Endothelial cell of umbilical vein (primary cell): ENCODE measurements at regions of chr22 and their contacts with region 1.

Region 1: GRCh38 chr22:41966607-41967240 is 2.5 kb upstream of the SEPTIN3 start:
- DNase-seq: peak; percentile 72
- H3K4me3 ChIP-seq: no peak overlapping the region
- H3K27ac ChIP-seq: no peak overlapping the region
- H3K4me1 ChIP-seq: peaks cover 4% of the 10 kb centered on the region
- H3K27me3 ChIP-seq: no peaks in the 10 kb centered on the region
- CTCF ChIP-seq: peak; percentile 34 to 48
- POLR2A ChIP-seq: no peak

Region 2: DNA sequence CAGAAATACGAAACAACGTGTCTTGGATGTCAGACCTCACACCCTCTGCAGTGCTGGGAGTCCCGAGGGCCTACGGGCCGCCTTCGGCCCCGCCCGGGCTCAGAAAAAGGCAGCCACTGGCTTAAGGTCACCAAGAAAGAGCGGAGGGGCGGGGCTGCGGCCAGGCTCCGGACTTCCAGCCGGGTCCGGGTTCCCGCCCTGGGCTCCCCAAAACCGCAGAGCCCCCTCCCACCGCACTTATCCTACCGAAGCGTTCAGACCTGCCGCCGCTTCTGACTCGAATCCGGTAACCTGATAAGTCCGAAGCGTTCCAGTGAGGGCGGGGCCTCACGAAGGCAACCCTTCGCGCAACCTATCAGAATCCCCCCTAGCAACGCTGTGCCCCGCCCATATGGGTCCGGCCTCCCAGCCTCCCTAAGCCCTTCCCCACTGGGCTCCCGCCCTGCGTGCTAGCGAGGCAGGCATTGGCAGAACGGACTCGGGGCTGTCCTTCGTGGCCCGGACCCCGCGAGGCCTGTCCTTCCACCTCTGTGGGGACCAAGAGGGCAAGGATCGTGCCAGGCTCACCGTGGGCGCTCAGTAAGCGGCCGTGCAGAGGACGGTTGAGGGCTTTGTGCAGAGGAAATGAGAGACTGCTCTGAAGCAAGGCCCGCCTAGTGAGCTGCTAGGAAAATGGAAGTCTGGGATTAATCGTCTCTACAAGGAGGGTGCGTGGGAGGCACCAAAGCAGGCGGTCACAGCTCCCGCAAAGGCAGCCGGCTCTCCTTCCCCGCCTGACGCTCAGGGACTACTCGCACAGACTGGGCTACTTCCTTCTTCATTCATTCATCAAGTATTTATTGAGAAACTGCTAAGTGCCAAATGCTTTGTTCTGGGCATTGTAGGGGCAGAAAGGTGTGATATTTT is 104.0 kb after region 1 on chr22 and contains the start of gene NAGA:
- CTCF ChIA-PET with region 1: interaction called, 4 read pairs
- POLR2A ChIA-PET with region 1: no interaction called
- dilution Hi-C with region 1: no loop called
- intact Hi-C with region 1: loop called (anchors 2 kb)
- DNase-seq: peak; percentile 97
- H3K4me3 ChIP-seq: peak within 1 kb of the TSS; percentile 26 to 60 (median 54)
- H3K27ac ChIP-seq: peak within 1 kb of the TSS; percentile 30
- H3K4me1 ChIP-seq: peaks cover 23% of the 10 kb centered on the region
- H3K27me3 ChIP-seq: no peaks in the 10 kb centered on the region
- CTCF ChIP-seq: no peak
- POLR2A ChIP-seq: peak; percentile 65
- total RNA-seq, gene NAGA: 29.0 and 33.1 TPM in 2 replicates

Region 3: GRCh38 chr22:42114721-42115120 is 148.0 kb after region 1 on chr22:
- CTCF ChIA-PET with region 1: interaction called, 83 read pairs
- POLR2A ChIA-PET with region 1: no interaction called
- dilution Hi-C with region 1: no loop called
- intact Hi-C with region 1: loop called (anchors 1 kb)
- DNase-seq: peak; percentile 41
- H3K4me3 ChIP-seq: no peak overlapping the region
- H3K27ac ChIP-seq: no peak overlapping the region
- H3K4me1 ChIP-seq: no peaks in the 10 kb centered on the region
- H3K27me3 ChIP-seq: no peaks in the 10 kb centered on the region
- CTCF ChIP-seq: peak; percentile 32 to 56
- POLR2A ChIP-seq: no peak

Region 4: DNA sequence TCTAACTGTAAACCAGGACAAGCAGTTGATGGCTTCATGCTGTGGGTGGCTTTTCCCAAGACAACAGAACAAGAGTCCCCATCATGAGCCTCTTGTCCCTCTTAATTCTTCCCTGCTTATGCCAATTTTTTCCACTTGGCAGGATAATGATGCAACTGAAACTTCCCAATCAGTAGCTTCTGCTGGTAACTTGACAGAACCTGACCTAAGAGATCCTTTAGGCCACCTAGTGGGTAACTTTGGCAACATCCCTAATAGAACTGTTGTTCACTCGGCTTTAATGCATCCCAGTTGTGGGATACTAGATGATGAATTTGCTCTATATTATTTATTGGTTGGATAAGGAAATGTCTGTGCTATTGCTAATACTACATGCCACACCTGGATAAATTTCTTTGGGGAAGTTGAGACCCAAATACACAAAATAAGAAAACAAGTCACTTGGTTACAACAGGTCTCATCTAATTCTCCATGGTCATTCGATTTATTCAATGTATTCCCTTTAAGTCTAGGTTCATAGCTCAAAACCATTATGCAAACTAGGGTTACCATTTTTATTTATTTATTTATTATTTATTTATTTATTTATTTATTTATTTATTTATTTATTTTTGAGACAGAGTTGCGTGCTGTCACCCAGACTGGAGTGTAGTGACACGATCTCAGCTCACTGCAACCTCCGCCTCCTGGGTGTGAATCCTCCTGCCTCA is 506.9 kb after region 1 on chr22:
- CTCF ChIA-PET with region 1: interaction called, 13 read pairs
- POLR2A ChIA-PET with region 1: no interaction called
- dilution Hi-C with region 1: no loop called
- intact Hi-C with region 1: no loop called
- DNase-seq: peak; percentile 56
- H3K4me3 ChIP-seq: no peak overlapping the region
- H3K27ac ChIP-seq: no peak overlapping the region
- H3K4me1 ChIP-seq: no peaks in the 10 kb centered on the region
- H3K27me3 ChIP-seq: peaks cover 2 to 4% of the 10 kb centered on the region in 2 experiments
- CTCF ChIP-seq: peak; percentile 51 to 56
- POLR2A ChIP-seq: no peak